ENCODE measurements at regions of chr12 and their contacts with region 1.

Region 1: DNA sequence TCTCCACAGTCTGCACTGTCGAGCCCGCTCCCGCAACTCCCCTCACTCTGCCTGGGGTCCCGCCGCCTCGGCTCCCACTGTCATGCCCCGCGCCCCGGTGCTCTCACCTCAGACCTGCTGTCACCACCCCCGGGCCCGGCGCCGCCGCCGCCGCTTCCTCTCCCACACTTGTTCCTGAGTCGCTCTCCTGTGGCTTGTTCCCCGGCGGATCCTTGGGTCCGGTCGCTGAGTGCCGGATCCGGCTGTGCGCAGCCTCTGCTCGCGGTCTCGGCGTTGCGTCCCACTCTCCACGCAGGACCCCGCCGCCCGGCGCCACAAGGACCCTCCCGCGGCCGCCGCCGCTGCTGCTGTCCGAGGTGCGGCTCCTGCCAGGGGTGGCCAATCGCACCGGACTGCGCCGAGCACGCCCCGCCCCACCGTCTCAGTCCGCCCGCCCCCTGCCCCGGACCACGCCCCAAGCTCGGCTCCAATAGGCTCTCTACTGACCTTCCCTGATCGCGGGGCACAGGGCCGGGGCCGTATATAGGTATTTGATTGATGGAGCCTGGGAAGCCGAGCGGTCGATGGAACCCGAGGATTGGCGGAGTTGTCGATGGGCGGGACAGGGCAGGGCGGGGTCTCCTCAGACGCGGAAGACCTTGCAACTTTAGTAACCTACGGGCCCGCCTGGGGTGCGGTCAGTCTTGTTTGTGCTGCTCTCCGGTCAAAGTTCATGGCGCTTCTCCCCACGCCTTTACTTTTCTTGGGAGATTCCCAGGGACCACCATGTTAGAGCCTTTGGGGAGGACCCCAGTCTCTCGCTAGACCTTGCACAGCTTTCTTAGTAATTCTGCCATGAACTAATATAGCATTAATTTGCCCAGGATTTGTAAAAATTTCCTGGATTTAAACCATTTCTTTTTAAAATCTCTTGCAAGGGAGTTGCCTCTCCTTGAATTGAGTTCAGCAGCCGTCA is at the start of gene TAOK3:
- DNase-seq: peak; percentile 99
- H3K4me3 ChIP-seq: peak within 1 kb of the TSS; percentile 93
- H3K27ac ChIP-seq: peak within 1 kb of the TSS; percentile 60
- H3K27me3 ChIP-seq: no peaks in the 10 kb centered on the region
- CTCF ChIP-seq: no peak

Region 2: DNA sequence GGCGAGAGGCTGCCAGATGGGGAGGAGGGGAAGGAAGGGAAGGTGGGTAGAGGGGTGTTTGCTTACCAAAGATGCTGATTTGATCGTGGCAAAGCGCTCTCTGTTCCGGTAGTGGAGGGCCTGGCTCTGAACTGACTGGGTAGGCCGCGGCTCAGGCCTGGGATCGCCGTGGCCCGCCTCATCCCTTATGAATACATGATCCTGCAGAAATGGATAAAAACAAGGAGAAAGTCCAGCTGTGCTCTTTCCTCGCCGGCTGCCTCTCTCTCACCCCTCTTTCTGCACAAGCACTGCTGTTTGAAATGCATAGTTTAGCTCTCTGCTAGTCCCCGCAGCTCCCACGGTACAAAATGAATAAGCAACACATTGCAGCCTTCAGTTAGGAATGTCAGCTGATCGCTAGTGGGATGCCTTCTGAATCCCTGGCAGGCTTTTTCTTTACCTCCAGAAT is 183.1 kb before region 1 on chr12:
- in situ Hi-C with region 1: loop called (anchors 25 kb)
- DNase-seq: peak; percentile 36
- H3K4me3 ChIP-seq: peak overlapping the region; percentile 60
- H3K27ac ChIP-seq: peak overlapping the region; percentile 59
- H3K27me3 ChIP-seq: no peaks in the 10 kb centered on the region
- CTCF ChIP-seq: no peak

Region 3: GRCh38 chr12:118560733-118561132 is 187.9 kb after region 1 on chr12:
- in situ Hi-C with region 1: no loop called
- DNase-seq: no peak
- H3K4me3 ChIP-seq: no peak overlapping the region
- H3K27ac ChIP-seq: no peak overlapping the region
- H3K27me3 ChIP-seq: no peaks in the 10 kb centered on the region
- CTCF ChIP-seq: no peak

Region 4: DNA sequence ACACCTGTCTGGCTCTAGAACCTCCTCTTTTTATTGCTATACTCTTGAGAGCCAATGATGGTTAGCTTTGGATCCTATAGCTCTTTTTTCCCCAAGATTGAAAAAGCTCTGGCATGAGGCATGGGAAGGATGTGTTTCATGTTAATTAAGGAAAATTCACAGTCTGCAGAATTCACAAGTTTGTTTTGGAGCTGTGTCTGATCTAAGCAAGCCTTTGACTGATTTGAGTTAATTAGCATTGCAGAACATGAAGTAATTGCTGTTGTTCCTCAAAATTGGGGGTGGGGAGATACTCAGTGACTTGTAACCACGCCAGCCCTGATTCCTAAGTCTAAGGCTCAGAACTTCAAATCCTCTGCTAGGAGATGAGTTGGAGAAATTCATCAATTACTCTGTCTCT is 208.6 kb after region 1 on chr12:
- in situ Hi-C with region 1: no loop called
- DNase-seq: no peak
- H3K4me3 ChIP-seq: no peak overlapping the region
- H3K27ac ChIP-seq: no peak overlapping the region
- H3K27me3 ChIP-seq: no peaks in the 10 kb centered on the region
- CTCF ChIP-seq: no peak

Region 5: GRCh38 chr12:118958520-118958919 is 585.7 kb after region 1 on chr12:
- in situ Hi-C with region 1: no loop called
- DNase-seq: no peak
- H3K4me3 ChIP-seq: no peak overlapping the region
- H3K27ac ChIP-seq: no peak overlapping the region
- H3K27me3 ChIP-seq: no peaks in the 10 kb centered on the region
- CTCF ChIP-seq: no peak

Measured in brain microvascular endothelial cell (primary cell).